ENCODE measurements at regions of chr2 and their contacts with region 1.

Region 1: GRCh38 chr2:197310271-197310985 is at the start of gene ANKRD44:
- DNase-seq: peak; percentile 91
- ATAC-seq: peak; percentile 65
- H3K4me3 Mint-ChIP-seq: peak within 1 kb of the TSS; percentile 96
- H3K27ac Mint-ChIP-seq: peak within 1 kb of the TSS; percentile 99
- H3K4me1 Mint-ChIP-seq: peaks cover 63% of the 10 kb centered on the region
- H3K27me3 Mint-ChIP-seq: no peaks in the 10 kb centered on the region
- CTCF ChIP-seq: no peak
- total RNA-seq, gene ANKRD44: 131 to 132 TPM

Region 2: GRCh38 chr2:197191177-197191939 is 119.1 kb before region 1 on chr2:
- CTCF ChIA-PET with region 1: interaction called, 33 read pairs
- POLR2A ChIA-PET with region 1: interaction called, 34 read pairs
- intact Hi-C with region 1: loop called (anchors 2 kb)
- DNase-seq: no peak
- ATAC-seq: peak; percentile 40
- H3K4me3 Mint-ChIP-seq: peak overlapping the region; percentile 41
- H3K27ac Mint-ChIP-seq: peak overlapping the region; percentile 78
- H3K4me1 Mint-ChIP-seq: peaks cover 76% of the 10 kb centered on the region
- H3K27me3 Mint-ChIP-seq: no peaks in the 10 kb centered on the region
- CTCF ChIP-seq: peak; percentile 84

Region 3: DNA sequence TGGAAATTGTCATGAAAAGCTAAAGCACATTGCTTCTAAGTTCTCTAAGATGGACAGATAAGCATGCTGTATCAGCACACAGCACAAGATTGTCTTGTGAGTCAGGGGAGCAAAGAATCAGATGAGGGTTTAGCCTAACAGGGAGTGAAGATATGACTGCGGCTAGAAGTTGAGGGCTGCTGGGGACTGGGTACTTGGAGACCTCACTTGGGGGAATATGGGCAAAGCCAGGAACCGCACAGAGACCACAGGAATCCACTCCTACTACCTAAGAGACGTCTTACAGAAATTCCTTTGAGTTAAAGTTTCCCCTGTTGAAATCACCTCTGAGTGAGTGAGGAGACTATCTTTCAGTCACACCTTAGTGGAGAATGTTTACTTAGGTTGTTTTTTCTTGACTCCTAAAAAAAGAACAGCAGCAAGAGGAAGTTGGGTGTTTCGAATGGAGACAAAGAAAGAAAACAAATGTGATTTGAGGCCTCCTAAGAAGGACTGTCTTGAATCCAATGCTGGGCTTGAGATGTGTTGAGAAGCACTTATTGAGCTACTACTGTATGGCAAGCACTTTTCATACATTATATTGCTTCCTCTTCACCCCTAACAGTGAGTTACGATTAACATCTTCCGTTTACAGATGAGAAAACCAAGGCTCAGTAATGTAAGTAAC is 100.6 kb before region 1 on chr2:
- CTCF ChIA-PET with region 1: interaction called, 6 read pairs
- POLR2A ChIA-PET with region 1: interaction called, 26 read pairs
- intact Hi-C with region 1: no loop called
- DNase-seq: peak; percentile 67
- ATAC-seq: peak; percentile 45
- H3K4me3 Mint-ChIP-seq: peak overlapping the region; percentile 64
- H3K27ac Mint-ChIP-seq: peak overlapping the region; percentile 97
- H3K4me1 Mint-ChIP-seq: peaks cover 96% of the 10 kb centered on the region
- H3K27me3 Mint-ChIP-seq: no peaks in the 10 kb centered on the region
- CTCF ChIP-seq: no peak

Region 4: GRCh38 chr2:197255543-197255942 is 54.9 kb before region 1 on chr2:
- CTCF ChIA-PET with region 1: interaction called, 11 read pairs
- POLR2A ChIA-PET with region 1: interaction called, 31 read pairs
- intact Hi-C with region 1: loop called (anchors 2 kb)
- DNase-seq: peak; percentile 94
- ATAC-seq: peak; percentile 91
- H3K4me3 Mint-ChIP-seq: peak overlapping the region; percentile 76
- H3K27ac Mint-ChIP-seq: peak overlapping the region; percentile 92
- H3K4me1 Mint-ChIP-seq: peaks cover 78% of the 10 kb centered on the region
- H3K27me3 Mint-ChIP-seq: no peaks in the 10 kb centered on the region
- CTCF ChIP-seq: no peak

Region 5: GRCh38 chr2:197286805-197287598 is 23.4 kb before region 1 on chr2:
- CTCF ChIA-PET with region 1: interaction called, 4 read pairs
- POLR2A ChIA-PET with region 1: interaction called, 21 read pairs
- intact Hi-C with region 1: loop called (anchors 2 kb)
- DNase-seq: peak; percentile 70
- ATAC-seq: peak; percentile 92
- H3K4me3 Mint-ChIP-seq: peak overlapping the region; percentile 70
- H3K27ac Mint-ChIP-seq: peak overlapping the region; percentile 100
- H3K4me1 Mint-ChIP-seq: peaks cover 76% of the 10 kb centered on the region
- H3K27me3 Mint-ChIP-seq: no peaks in the 10 kb centered on the region
- CTCF ChIP-seq: no peak

Region 6: DNA sequence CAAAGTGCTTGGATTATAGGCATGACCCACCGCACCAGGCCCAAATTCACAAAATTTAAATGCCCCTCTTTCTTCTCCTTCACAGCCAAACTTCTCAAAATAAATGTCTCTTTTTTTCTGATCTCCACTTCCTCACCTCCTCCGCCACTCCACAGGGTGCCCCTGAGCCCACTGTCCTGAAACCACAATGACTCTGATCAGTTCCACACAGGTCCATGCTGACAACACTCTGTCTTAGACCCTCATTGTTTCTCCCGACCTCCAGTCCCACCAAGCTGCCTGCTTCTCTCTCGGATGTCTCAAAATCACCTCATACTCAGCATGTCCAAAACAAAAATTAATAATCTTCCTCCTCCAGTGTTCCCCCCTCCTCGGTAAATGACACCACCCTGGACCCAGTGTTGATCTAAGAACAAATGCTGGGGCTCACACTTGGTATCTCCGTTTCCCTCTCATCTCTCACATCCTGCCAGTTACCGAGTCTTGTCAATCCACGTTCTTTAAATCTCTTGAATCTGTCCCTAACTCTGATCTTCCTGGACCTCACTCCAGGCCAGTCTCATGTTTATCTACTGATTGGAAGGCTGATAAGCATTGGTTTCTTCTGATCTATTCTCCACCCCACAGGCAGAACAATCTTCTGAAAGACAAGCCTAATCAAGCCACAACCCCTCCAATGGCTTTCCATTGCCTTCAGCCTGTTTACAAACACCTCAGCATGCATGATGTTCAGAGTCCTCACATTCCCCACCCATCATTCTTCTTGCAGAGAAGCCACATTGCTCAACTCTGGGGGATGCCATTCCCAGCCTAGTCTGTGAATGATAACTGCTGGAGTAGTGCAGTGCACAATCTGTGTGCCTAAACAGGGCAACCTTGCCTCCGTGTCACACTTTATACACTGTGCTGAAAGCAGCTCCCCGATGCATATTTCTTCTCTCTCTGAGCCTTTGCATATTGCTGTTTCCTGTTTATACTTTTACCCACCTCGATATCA is 12.6 kb after region 1 on chr2:
- CTCF ChIA-PET with region 1: interaction called, 11 read pairs
- POLR2A ChIA-PET with region 1: interaction called, 15 read pairs
- intact Hi-C with region 1: loop called (anchors 2 kb)
- DNase-seq: peak; percentile 37
- ATAC-seq: peak; percentile 54
- H3K4me3 Mint-ChIP-seq: peak overlapping the region; percentile 61
- H3K27ac Mint-ChIP-seq: peak overlapping the region; percentile 95
- H3K4me1 Mint-ChIP-seq: peaks cover 72% of the 10 kb centered on the region
- H3K27me3 Mint-ChIP-seq: no peaks in the 10 kb centered on the region
- CTCF ChIP-seq: no peak